HepG2 (cell line): ENCODE measurements at regions of chrX and their contacts with region 1.

Region 1: GRCh38 chrX:54325713-54326112 is 32.1 kb downstream of the WNK3 start:
- DNase-seq: no peak
- ATAC-seq: no peak
- H3K4me3 ChIP-seq: no peak overlapping the region
- H3K27ac ChIP-seq: no peak overlapping the region
- H3K4me1 ChIP-seq: no peaks in the 10 kb centered on the region
- H3K27me3 ChIP-seq: no peaks in the 10 kb centered on the region
- CTCF ChIP-seq: no peak
- EP300 ChIP-seq: no peak
- POLR2A ChIP-seq: no peak
- RAD21 ChIP-seq: no peak

Region 2: DNA sequence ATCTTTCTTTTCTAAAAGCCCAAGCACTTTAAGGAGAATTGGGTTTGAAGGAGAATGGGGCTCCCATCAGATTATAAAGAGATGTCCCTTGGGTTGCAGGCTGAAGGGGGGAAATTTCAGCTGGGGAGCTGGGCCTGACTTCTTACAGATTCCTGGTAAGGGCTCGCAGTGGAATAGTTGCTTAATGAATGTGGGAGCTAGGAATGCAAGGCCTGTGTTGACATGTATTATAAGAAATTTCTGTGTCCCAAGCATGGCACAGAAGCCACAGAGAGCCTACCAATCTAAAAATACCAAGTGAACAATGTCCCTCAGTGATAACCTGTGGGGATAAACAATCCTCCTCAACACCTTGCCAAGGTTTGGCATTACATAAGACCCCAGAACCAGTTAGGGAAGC is 71.4 kb after region 1 on chrX:
- CTCF ChIA-PET with region 1: no interaction called
- POLR2A ChIA-PET with region 1: no interaction called
- in situ Hi-C with region 1: loop called (anchors 10 kb)
- intact Hi-C with region 1: no loop called
- DNase-seq: no peak
- ATAC-seq: no peak
- H3K4me3 ChIP-seq: no peak overlapping the region
- H3K27ac ChIP-seq: no peak overlapping the region
- H3K4me1 ChIP-seq: no peaks in the 10 kb centered on the region
- H3K27me3 ChIP-seq: no peaks in the 10 kb centered on the region
- CTCF ChIP-seq: no peak
- EP300 ChIP-seq: no peak
- POLR2A ChIP-seq: no peak
- RAD21 ChIP-seq: no peak